K562 (cell line): ENCODE measurements at regions of chr12 and their contacts with region 1.

Region 1: DNA sequence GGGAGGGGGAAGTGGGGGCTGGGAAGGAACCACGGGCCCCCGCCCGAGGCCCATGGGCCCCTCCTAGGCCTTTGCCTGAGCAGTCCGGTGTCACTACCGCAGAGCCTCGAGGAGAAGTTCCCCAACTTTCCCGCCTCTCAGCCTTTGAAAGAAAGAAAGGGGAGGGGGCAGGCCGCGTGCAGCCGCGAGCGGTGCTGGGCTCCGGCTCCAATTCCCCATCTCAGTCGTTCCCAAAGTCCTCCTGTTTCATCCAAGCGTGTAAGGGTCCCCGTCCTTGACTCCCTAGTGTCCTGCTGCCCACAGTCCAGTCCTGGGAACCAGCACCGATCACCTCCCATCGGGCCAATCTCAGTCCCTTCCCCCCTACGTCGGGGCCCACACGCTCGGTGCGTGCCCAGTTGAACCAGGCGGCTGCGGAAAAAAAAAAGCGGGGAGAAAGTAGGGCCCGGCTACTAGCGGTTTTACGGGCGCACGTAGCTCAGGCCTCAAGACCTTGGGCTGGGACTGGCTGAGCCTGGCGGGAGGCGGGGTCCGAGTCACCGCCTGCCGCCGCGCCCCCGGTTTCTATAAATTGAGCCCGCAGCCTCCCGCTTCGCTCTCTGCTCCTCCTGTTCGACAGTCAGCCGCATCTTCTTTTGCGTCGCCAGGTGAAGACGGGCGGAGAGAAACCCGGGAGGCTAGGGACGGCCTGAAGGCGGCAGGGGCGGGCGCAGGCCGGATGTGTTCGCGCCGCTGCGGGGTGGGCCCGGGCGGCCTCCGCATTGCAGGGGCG is at the start of gene GAPDH:
- DNase-seq: peak in 3 of 4 experiments; percentile 69 to 94 (median 90)
- ATAC-seq: peak; percentile 77
- H3K4me3 ChIP-seq: peak within 1 kb of the TSS; percentile 84
- H3K27ac ChIP-seq: peak within 1 kb of the TSS; percentile 87
- H3K4me1 ChIP-seq: peaks cover 31 to 62% of the 10 kb centered on the region in 2 experiments; a peak in 4 of 5 replicates
- H3K27me3 ChIP-seq: no peaks in the 10 kb centered on the region
- CTCF ChIP-seq: no peak; a peak in 1 of 6 replicates
- EP300 ChIP-seq: no peak
- POLR2A ChIP-seq: peak; percentile 99
- RAD21 ChIP-seq: no peak
- polyA plus RNA-seq, gene GAPDH: 5,813 to 6,029 TPM

Region 2: GRCh38 chr12:6323340-6323994 is 210.6 kb before region 1 on chr12:
- CTCF ChIA-PET with region 1: no interaction called
- POLR2A ChIA-PET with region 1: no interaction called
- in situ Hi-C with region 1: no loop called
- intact Hi-C with region 1: loop called (anchors 10 kb)
- DNase-seq: peak; percentile 63 to 77 (median 70)
- ATAC-seq: peak; percentile 84
- H3K4me3 ChIP-seq: no peak overlapping the region
- H3K27ac ChIP-seq: peak overlapping the region; percentile 69; the same call in 2 of the 3 replicates
- H3K4me1 ChIP-seq: peaks cover 16 to 21% of the 10 kb centered on the region in 2 experiments; a peak in 4 of 5 replicates
- H3K27me3 ChIP-seq: peaks cover 0 to 6% of the 10 kb centered on the region in 2 experiments; a peak in 4 of 5 replicates
- CTCF ChIP-seq: peak; percentile 67 to 93 (median 90)
- EP300 ChIP-seq: peak; percentile 40; the same call in 1 of the 2 replicates
- POLR2A ChIP-seq: no peak
- RAD21 ChIP-seq: peak; percentile 48 to 72

Region 3: GRCh38 chr12:6432991-6433390 is 101.1 kb before region 1 on chr12:
- CTCF ChIA-PET with region 1: no interaction called
- POLR2A ChIA-PET with region 1: no interaction called
- in situ Hi-C with region 1: no loop called
- intact Hi-C with region 1: no loop called
- DNase-seq: no peak
- ATAC-seq: no peak
- H3K4me3 ChIP-seq: no peak overlapping the region
- H3K27ac ChIP-seq: no peak overlapping the region
- H3K4me1 ChIP-seq: peaks cover 7 to 18% of the 10 kb centered on the region in 2 experiments; a peak in 3 of 5 replicates
- H3K27me3 ChIP-seq: no peaks in the 10 kb centered on the region
- CTCF ChIP-seq: no peak
- EP300 ChIP-seq: no peak
- POLR2A ChIP-seq: no peak
- RAD21 ChIP-seq: no peak

Region 4: GRCh38 chr12:6493497-6494257 is 40.4 kb before region 1 on chr12 and contains the start of gene NCAPD2:
- CTCF ChIA-PET with region 1: no interaction called
- POLR2A ChIA-PET with region 1: interaction called, 5 read pairs
- in situ Hi-C with region 1: no loop called
- intact Hi-C with region 1: loop called (anchors 2 kb)
- DNase-seq: peak; percentile 95 to 97 (median 96)
- ATAC-seq: peak; percentile 94
- H3K4me3 ChIP-seq: peak within 1 kb of the TSS; percentile 50
- H3K27ac ChIP-seq: peak within 1 kb of the TSS; percentile 86
- H3K4me1 ChIP-seq: peaks cover 0 to 15% of the 10 kb centered on the region in 2 experiments; a peak in 3 of 5 replicates
- H3K27me3 ChIP-seq: no peaks in the 10 kb centered on the region
- CTCF ChIP-seq: no peak; a peak in 1 of 6 replicates
- EP300 ChIP-seq: no peak
- POLR2A ChIP-seq: peak; percentile 83
- RAD21 ChIP-seq: no peak
- polyA plus RNA-seq, gene NCAPD2: 16.9 to 35.5 TPM

Region 5: DNA sequence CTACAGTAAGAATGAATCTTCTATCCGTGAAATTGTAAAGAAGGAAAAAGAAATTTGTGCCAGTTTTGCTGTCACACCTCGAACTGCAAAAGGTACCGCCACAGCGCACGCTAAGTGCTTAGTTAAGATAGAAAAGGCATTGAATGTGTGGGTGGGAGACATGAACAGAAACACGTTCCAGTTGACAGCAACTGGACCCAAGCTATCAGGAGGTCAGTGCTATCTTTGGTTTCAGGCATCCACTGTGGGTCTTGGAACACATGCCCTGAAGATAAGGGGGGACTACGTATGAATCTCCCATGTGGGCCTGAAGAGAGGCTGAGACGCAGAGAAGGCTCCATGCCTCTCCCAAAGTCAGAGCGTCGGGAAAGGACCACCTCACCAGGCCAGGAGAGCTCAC is 11.9 kb after region 1 on chr12:
- CTCF ChIA-PET with region 1: no interaction called
- POLR2A ChIA-PET with region 1: interaction called, 20 read pairs
- in situ Hi-C with region 1: no loop called
- intact Hi-C with region 1: no loop called
- DNase-seq: peak; percentile 56 to 89 (median 66)
- ATAC-seq: peak; percentile 63
- H3K4me3 ChIP-seq: no peak overlapping the region
- H3K27ac ChIP-seq: peak overlapping the region; percentile 59
- H3K4me1 ChIP-seq: peaks cover 46 to 69% of the 10 kb centered on the region in 2 experiments
- H3K27me3 ChIP-seq: no peaks in the 10 kb centered on the region
- CTCF ChIP-seq: no peak
- EP300 ChIP-seq: peak; percentile 77; the same call in 1 of the 2 replicates
- POLR2A ChIP-seq: no peak
- RAD21 ChIP-seq: no peak